Transverse colon (tissue), 4 donors: ENCODE measurements at regions of chr12 and their contacts with region 1.

Region 1: GRCh38 chr12:121793838-121794533 is 498 bp upstream of the RHOF start:
- DNase-seq: peak; percentile 96
- H3K4me3 ChIP-seq: peak overlapping the region; percentile 43 to 58 (median 50)
- H3K27ac ChIP-seq: peak overlapping the region; percentile 100
- H3K4me1 ChIP-seq: peaks cover 45 to 88% (median 67%) of the 10 kb centered on the region in 4 donors
- H3K27me3 ChIP-seq: no peaks in the 10 kb centered on the region
- CTCF ChIP-seq: peak; percentile 100
- EP300 ChIP-seq: no peak
- POLR2A ChIP-seq: peak; percentile 48

Region 2: GRCh38 chr12:121697098-121697698 is 96.8 kb before region 1 on chr12:
- in situ Hi-C with region 1: loop called in 3 of 4 experiments (anchors 5 to 10 kb)
- intact Hi-C with region 1: loop called (anchors 5 kb)
- DNase-seq: no peak
- H3K4me3 ChIP-seq: no peak overlapping the region
- H3K27ac ChIP-seq: no peak overlapping the region
- H3K4me1 ChIP-seq: peaks cover 0 to 4% (median 2%) of the 10 kb centered on the region in 4 donors
- H3K27me3 ChIP-seq: no peaks in the 10 kb centered on the region
- CTCF ChIP-seq: peak; percentile 54 to 87 (median 62)
- EP300 ChIP-seq: no peak
- POLR2A ChIP-seq: no peak

Region 3: GRCh38 chr12:121811434-121812319 is 17.7 kb after region 1 on chr12:
- in situ Hi-C with region 1: no loop called
- intact Hi-C with region 1: loop called (anchors 2 kb)
- DNase-seq: peak; percentile 77
- H3K4me3 ChIP-seq: peak overlapping the region; percentile 46 to 68 (median 50)
- H3K27ac ChIP-seq: peak overlapping the region; percentile 80 to 86 (median 83)
- H3K4me1 ChIP-seq: peaks cover 31 to 49% (median 39%) of the 10 kb centered on the region in 4 donors
- H3K27me3 ChIP-seq: no peaks in the 10 kb centered on the region
- CTCF ChIP-seq: peak; percentile 98 to 100 (median 99)
- EP300 ChIP-seq: no peak
- POLR2A ChIP-seq: peak; percentile 20

Region 4: DNA sequence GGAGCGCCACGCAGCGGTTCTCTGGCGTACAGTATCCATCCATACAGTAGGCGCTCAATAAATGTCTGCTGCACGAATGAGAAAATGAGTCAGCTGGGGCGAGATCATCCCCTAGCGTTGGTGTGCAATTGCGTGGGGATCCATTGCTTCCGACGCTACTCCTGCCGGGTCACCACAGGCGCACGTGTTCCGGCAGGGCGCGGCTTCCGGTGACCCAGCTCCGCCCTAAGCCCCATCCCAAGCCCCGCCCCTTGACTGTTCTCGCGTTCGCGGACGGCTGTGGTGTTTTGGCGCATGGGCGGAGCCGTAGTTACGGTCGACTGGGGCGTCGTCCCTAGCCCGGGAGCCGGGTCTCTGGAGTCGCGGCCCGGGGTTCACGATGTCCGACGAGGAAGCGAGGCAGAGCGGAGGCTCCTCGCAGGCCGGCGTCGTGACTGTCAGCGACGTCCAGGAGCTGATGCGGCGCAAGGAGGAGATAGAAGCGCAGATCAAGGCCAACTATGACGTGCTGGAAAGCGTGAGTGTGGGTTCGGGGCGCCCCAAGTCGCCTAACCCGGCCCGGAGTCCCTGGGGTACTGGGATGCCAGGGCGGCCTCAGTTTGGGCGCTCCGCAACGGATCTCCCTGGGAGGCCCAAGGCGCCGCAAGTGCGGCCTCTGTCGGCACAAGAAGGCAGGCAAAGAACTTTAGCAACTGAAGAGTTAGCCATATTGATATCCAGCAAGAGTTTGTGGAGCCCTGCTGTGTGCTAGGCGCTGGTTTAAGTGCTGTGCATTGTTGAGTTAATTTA is 94.7 kb after region 1 on chr12 and contains the start of gene PSMD9:
- in situ Hi-C with region 1: loop called in 1 of 4 experiments (anchors 10 kb)
- intact Hi-C with region 1: loop called (anchors 2 kb)
- DNase-seq: peak; percentile 99
- H3K4me3 ChIP-seq: peak within 1 kb of the TSS; percentile 67 to 87 (median 84)
- H3K27ac ChIP-seq: peak within 1 kb of the TSS; percentile 97 to 99 (median 98)
- H3K4me1 ChIP-seq: peaks cover 20 to 45% (median 24%) of the 10 kb centered on the region in 4 donors
- H3K27me3 ChIP-seq: no peaks in the 10 kb centered on the region
- CTCF ChIP-seq: peak; percentile 48 to 66 (median 62)
- EP300 ChIP-seq: no peak
- POLR2A ChIP-seq: peak; percentile 86
- total RNA-seq, gene PSMD9: 21.7 to 57.3 (median 46.2) TPM